Activated B cell treated with CpG ODN at 0.5 μM for 24 hours (primary cell): ENCODE measurements at regions of chr6 and their contacts with region 1.

Region 1: DNA sequence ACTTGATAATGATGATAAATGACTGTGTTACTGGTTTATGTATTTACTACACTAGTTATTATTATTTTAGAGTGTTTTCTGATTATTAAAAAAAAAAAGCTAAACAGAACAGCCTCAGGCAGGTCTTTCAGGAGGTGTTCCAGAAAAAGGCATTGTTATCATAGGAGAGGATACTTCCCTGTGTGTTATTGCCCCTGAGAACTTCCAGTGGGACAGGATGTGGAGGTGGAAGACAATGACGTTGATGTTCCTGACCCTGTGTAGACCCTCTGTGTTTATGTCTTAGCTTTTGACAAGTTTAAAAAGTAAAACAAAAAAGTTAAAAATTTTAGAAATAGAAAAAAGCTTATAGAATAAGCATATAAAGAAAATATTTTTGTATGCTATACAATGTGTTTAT is 49.1 kb downstream of the NCOA7 start:
- DNase-seq: no peak
- ATAC-seq: no peak
- H3K4me3 Mint-ChIP-seq: no peak overlapping the region
- H3K27ac Mint-ChIP-seq: no peak overlapping the region
- H3K4me1 Mint-ChIP-seq: peaks cover 9% of the 10 kb centered on the region
- H3K27me3 Mint-ChIP-seq: no peaks in the 10 kb centered on the region
- CTCF ChIP-seq: no peak

Region 2: DNA sequence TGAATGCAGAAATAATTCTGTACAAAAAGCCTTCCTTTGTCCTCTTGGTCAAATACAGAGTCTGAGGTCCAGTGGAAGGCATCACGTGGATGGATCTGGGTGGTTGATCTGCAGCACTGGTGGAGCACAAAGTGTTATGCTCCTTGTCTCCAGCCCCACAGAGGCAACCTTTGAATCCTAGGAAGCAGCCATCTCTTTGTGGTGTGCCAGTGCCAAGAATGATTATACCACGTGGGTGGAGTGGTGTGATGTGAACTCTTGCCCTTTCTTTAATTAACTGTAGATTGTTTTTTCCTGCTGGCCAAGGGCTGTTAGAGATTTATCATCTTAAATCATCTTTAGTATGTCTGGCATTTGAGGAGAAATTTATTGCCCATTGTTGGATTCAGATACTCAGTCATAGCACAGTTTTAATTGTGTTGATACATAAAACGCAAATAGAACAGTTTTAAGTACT is 18.0 kb before region 1 on chr6:
- CTCF ChIA-PET with region 1: no interaction called
- POLR2A ChIA-PET with region 1: interaction called, 7 read pairs
- intact Hi-C with region 1: loop called (anchors 2 kb)
- DNase-seq: no peak
- ATAC-seq: no peak
- H3K4me3 Mint-ChIP-seq: no peak overlapping the region
- H3K27ac Mint-ChIP-seq: no peak overlapping the region
- H3K4me1 Mint-ChIP-seq: peaks cover 11% of the 10 kb centered on the region
- H3K27me3 Mint-ChIP-seq: no peaks in the 10 kb centered on the region
- CTCF ChIP-seq: no peak

Region 3: DNA sequence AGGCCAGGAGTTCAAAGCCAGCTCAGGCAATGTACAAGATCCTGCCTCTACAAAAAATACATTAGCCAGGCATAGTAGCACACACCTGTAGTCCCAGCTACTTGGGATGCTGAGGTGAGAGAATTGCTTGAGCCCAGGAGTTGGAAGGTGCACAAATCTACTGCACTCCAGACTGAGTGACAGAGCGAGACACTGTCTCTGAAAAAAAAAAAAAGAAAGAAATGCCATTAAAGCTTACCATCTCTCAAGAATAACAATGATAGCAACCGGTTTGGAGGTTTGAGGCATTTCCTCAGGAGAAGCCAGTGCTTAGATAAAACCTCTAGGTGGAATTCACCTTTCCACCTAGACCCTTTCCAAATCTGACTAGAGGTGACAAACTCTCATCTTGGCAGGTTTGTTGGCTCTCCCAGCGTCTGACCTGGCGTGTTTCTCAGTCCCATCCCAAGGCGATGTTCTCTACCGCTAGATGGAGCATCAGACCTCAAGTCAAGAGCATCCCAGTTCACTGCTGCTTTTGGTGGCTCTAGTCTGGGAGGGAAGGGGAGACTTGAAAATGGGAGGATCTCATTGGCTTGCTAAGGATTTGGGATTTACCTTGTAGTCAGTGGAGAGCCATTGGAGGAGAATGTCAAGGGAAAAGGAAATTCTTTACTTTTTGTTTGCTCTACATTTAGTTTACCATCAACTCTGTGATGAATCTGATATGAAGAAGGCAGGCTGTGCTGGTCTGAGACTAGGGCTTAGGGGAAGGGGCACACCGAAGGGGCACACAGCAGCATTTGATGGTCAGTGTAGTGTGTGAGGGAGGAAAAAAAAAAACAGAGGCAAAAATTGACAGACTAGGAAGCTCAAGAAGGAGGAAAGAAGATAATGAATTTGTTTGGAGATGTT is 18.8 kb after region 1 on chr6:
- CTCF ChIA-PET with region 1: no interaction called
- POLR2A ChIA-PET with region 1: no interaction called
- intact Hi-C with region 1: loop called (anchors 2 kb)
- DNase-seq: no peak
- ATAC-seq: peak; percentile 45
- H3K4me3 Mint-ChIP-seq: no peak overlapping the region
- H3K27ac Mint-ChIP-seq: no peak overlapping the region
- H3K4me1 Mint-ChIP-seq: no peaks in the 10 kb centered on the region
- H3K27me3 Mint-ChIP-seq: no peaks in the 10 kb centered on the region
- CTCF ChIP-seq: no peak